A549 (cell line): ENCODE measurements at regions of chr1 and their contacts with region 1.

Region 1: DNA sequence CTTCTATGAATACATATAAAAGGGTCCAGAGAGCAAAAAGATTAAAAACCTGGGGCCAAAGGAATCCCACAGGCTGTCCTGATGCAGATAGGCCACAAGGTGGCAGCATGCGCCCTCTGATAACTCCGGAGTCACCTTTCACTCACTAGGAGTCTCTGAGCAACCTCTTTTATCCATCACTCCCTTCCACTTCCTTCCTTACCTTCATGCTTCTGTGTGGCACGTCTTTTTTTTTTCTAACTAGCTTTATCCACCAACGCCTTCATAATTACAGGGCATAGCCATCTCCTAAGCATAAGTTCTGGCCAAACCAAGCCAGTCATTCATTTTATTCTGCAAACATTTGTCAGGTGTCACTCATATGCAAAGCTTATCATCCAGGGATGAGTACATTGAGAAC is 3.9 kb upstream of the PGLYRP4 start:
- DNase-seq: peak; percentile 69 to 77
- ATAC-seq: peak; percentile 60 to 76; a peak in 5 of 6 replicates
- H3K4me3 ChIP-seq: no peak overlapping the region
- H3K27ac ChIP-seq: no peak overlapping the region
- H3K4me1 ChIP-seq: no peaks in the 10 kb centered on the region
- CTCF ChIP-seq: peak; percentile 94
- EP300 ChIP-seq: no peak
- POLR2A ChIP-seq: no peak
- RAD21 ChIP-seq: peak; percentile 90 to 92

Region 2: GRCh38 chr1:153277817-153278216 is 74.7 kb before region 1 on chr1:
- CTCF ChIA-PET with region 1: no interaction called
- POLR2A ChIA-PET with region 1: no interaction called
- DNase-seq: peak; percentile 33 to 43
- ATAC-seq: peak; percentile 74 to 88; a peak in 5 of 6 replicates
- H3K4me3 ChIP-seq: no peak overlapping the region
- H3K27ac ChIP-seq: no peak overlapping the region
- H3K4me1 ChIP-seq: no peaks in the 10 kb centered on the region
- CTCF ChIP-seq: peak; percentile 32
- EP300 ChIP-seq: no peak
- POLR2A ChIP-seq: no peak
- RAD21 ChIP-seq: peak; percentile 18 to 56; a peak in 2 of 5 replicates

Region 3: GRCh38 chr1:153293851-153294250 is 58.7 kb before region 1 on chr1:
- CTCF ChIA-PET with region 1: no interaction called
- POLR2A ChIA-PET with region 1: no interaction called
- DNase-seq: no peak
- ATAC-seq: no peak
- H3K4me3 ChIP-seq: no peak overlapping the region
- H3K27ac ChIP-seq: no peak overlapping the region
- H3K4me1 ChIP-seq: no peaks in the 10 kb centered on the region
- CTCF ChIP-seq: no peak
- EP300 ChIP-seq: no peak
- POLR2A ChIP-seq: no peak
- RAD21 ChIP-seq: no peak

Region 4: GRCh38 chr1:153322568-153322967 is 30.0 kb before region 1 on chr1:
- CTCF ChIA-PET with region 1: no interaction called
- POLR2A ChIA-PET with region 1: no interaction called
- DNase-seq: no peak
- ATAC-seq: no peak
- H3K4me3 ChIP-seq: no peak overlapping the region
- H3K27ac ChIP-seq: no peak overlapping the region
- H3K4me1 ChIP-seq: no peaks in the 10 kb centered on the region
- CTCF ChIP-seq: no peak
- EP300 ChIP-seq: no peak
- POLR2A ChIP-seq: no peak
- RAD21 ChIP-seq: no peak

Region 5: DNA sequence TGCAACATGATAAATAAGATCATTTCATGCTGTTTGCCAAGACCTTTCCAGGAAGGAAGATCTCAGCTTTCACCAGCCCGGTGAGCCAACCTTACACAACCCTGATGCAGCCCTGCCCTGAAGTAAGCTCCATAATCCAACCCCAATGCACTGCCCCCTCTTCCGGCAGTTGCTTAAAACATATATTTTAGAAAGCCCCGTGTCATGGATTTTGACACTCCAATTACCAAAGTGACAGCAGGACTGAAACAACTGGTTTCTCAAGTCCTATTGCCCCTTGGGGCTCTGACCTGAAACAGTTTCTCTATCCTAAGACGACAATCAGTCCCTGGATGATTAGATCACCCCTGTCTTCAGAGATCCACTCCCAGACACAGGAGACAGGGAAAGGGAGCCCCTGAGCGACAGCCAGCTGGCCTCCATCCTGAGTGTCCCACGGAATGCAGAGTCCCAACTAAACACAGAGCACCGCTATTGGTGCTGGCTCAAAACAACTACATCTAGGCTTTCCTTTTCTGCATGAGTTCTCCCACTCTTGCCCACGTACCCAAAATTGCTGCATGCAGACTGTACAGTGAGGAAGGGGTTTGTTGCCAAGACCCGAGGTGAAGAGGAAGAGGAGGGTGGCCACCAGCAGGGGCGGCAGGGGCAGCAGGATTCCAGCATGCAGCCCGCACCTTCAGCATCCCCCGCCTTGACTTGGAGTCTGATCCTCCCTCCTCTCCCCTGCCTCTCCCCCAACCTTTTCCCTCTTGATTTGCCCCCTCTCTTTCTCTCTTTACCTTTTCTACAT is 13.0 kb after region 1 on chr1:
- CTCF ChIA-PET with region 1: interaction called, 47 read pairs
- POLR2A ChIA-PET with region 1: no interaction called
- DNase-seq: no peak
- ATAC-seq: no peak
- H3K4me3 ChIP-seq: no peak overlapping the region
- H3K27ac ChIP-seq: no peak overlapping the region
- H3K4me1 ChIP-seq: no peaks in the 10 kb centered on the region
- CTCF ChIP-seq: no peak
- EP300 ChIP-seq: no peak
- POLR2A ChIP-seq: no peak
- RAD21 ChIP-seq: no peak

Region 6: GRCh38 chr1:153395136-153395685 is 42.7 kb after region 1 on chr1:
- CTCF ChIA-PET with region 1: interaction called, 26 read pairs
- POLR2A ChIA-PET with region 1: no interaction called
- DNase-seq: no peak
- ATAC-seq: peak; percentile 41 to 51; a peak in 4 of 6 replicates
- H3K4me3 ChIP-seq: no peak overlapping the region
- H3K27ac ChIP-seq: no peak overlapping the region
- H3K4me1 ChIP-seq: no peaks in the 10 kb centered on the region
- CTCF ChIP-seq: no peak
- EP300 ChIP-seq: no peak
- POLR2A ChIP-seq: no peak
- RAD21 ChIP-seq: no peak

Region 7: GRCh38 chr1:153465811-153466636 is 113.5 kb after region 1 on chr1:
- CTCF ChIA-PET with region 1: interaction called, 35 read pairs
- POLR2A ChIA-PET with region 1: no interaction called
- DNase-seq: peak; percentile 58 to 75
- ATAC-seq: peak; percentile 76 to 94; a peak in 5 of 6 replicates
- H3K4me3 ChIP-seq: no peak overlapping the region
- H3K27ac ChIP-seq: no peak overlapping the region
- H3K4me1 ChIP-seq: no peaks in the 10 kb centered on the region
- CTCF ChIP-seq: peak; percentile 86
- EP300 ChIP-seq: no peak
- POLR2A ChIP-seq: no peak
- RAD21 ChIP-seq: peak; percentile 54 to 58

Region 8: GRCh38 chr1:153526132-153526543 is 173.6 kb after region 1 on chr1:
- CTCF ChIA-PET with region 1: interaction called, 12 read pairs
- POLR2A ChIA-PET with region 1: no interaction called
- DNase-seq: no peak
- ATAC-seq: peak; percentile 26 to 40; a peak in 3 of 6 replicates
- H3K4me3 ChIP-seq: no peak overlapping the region
- H3K27ac ChIP-seq: peak overlapping the region in 1 of 2 experiments; percentile 34; a peak in 3 of 6 replicates
- H3K4me1 ChIP-seq: no peaks in the 10 kb centered on the region
- CTCF ChIP-seq: no peak
- EP300 ChIP-seq: no peak
- POLR2A ChIP-seq: no peak
- RAD21 ChIP-seq: no peak